Activated T-helper 1 cell treated with anti-CD3 and anti-CD28 coated beads, Interleukin-12 subunit alpha, Interleukin-12 subunit beta, Interleukin-2, Interleukin-4 antibody, amounts not matched to agents 30 ng/mL and 10 ng/mL and 1 ng/mL, durations not matched to agents 14 hours and 24 hours and 36 hours (primary cell): ENCODE measurements at regions of chr7 and their contacts with region 1.

Region 1: GRCh38 chr7:28037220-28038010 is 143.2 kb downstream of the JAZF1 start:
- DNase-seq: no peak
- H3K4me3 Mint-ChIP-seq: peak overlapping the region; percentile 34
- H3K27ac Mint-ChIP-seq: peak overlapping the region; percentile 70
- H3K4me1 Mint-ChIP-seq: peaks cover 31% of the 10 kb centered on the region
- H3K27me3 Mint-ChIP-seq: peaks cover 16% of the 10 kb centered on the region

Region 2: DNA sequence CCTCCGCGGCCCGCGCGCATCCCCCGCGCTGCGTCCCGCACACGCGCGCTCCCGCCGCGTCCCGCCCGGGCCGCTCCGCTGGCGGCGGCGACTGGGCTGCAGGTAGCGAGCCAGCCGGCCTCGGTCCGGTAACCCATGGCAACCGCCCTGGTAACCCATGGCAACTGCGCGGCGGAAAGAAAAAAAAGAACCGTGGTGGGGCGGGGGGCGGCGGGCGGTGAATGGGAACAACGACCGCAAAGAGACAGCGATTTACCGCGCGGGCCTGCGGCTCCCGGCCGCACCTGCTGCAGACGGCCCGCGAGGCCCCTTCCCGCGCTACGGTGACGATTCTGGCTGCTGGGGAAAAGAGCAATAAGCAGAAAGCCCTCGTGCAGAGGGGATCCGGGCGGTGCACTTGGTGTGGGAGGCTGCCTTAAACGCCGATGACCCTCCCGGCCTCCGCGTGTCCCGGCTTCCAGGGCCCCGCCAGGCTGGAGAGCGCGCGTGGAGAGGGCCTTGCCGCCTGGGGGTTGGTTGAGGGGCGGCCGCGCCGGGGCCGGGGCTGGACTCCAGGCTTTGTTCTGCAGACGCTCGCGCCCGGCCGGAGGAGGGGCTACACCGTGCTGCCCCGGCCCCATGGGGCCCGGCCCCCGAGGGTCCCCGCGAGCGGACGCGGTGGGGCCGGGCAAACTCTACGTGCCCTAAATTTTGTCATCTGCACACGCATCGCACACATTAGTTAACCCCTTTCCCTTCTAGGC is 1661.1 kb before region 1 on chr7:
- intact Hi-C with region 1: loop called (anchors 10 kb)
- DNase-seq: peak; percentile 20
- H3K4me3 Mint-ChIP-seq: peak overlapping the region; percentile 79
- H3K27ac Mint-ChIP-seq: peak overlapping the region; percentile 79
- H3K4me1 Mint-ChIP-seq: peaks cover 7% of the 10 kb centered on the region
- H3K27me3 Mint-ChIP-seq: peaks cover 30% of the 10 kb centered on the region

Region 3: DNA sequence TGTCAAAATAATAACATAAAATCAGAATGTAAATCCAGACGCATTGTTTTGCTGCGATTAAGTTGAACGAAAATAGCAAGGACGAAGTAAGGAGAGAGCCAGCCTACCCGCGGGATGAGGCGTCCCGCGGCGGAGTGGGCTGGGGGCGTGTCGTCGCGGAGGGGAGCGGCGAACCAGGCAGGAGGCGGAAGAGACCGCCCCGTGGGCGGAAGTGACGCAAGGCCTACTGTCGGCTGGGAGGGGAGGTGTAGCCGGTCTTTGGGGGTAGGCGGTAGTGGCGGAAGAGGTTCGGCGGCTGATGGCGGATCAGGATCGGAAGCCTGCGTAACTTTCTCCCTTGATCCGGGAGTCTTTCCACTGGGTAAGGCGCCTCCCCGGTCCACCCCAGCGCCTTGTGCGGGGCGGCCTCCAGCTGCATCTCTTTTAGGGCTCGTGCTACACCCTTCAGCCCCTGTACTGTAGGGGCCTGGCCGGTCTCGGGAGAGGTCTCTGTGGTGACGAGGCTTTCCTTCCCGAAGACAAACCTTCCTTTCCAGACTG is 297.4 kb before region 1 on chr7 and contains the start of gene TAX1BP1:
- intact Hi-C with region 1: loop called (anchors 5 kb)
- DNase-seq: peak; percentile 93
- H3K4me3 Mint-ChIP-seq: peak within 1 kb of the TSS; percentile 92
- H3K27ac Mint-ChIP-seq: peak within 1 kb of the TSS; percentile 98
- H3K4me1 Mint-ChIP-seq: peaks cover 41% of the 10 kb centered on the region
- H3K27me3 Mint-ChIP-seq: peaks cover 2% of the 10 kb centered on the region
- total RNA-seq, gene TAX1BP1: 88.6 and 90.9 TPM in 2 replicates

Region 4: DNA sequence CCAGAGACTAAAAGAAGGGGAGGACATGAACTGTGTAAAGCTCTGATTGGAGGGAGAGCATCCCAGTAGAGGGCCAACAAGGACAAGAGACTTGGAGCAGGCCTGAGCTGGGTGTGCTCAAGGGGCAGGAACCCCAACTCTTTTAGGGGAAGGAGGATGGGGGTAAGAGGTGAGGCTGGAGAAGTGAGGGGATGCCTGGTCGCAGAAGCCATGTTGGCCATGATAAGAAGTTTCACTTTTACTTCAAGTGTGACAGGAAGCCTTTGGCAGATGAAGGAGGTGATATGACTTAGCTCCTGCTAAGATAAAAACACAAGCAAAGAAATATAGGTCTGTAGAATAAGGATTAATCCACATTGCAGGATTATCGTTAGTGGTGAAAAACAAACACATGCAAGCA is 65.1 kb before region 1 on chr7:
- intact Hi-C with region 1: loop called (anchors 2 kb)
- DNase-seq: peak; percentile 11
- H3K4me3 Mint-ChIP-seq: peak overlapping the region; percentile 41
- H3K27ac Mint-ChIP-seq: peak overlapping the region; percentile 12
- H3K4me1 Mint-ChIP-seq: peaks cover 21% of the 10 kb centered on the region
- H3K27me3 Mint-ChIP-seq: no peaks in the 10 kb centered on the region

Region 5: GRCh38 chr7:28155019-28155660 is 117.7 kb after region 1 on chr7:
- intact Hi-C with region 1: loop called (anchors 1 kb)
- DNase-seq: no peak
- H3K4me3 Mint-ChIP-seq: peak overlapping the region; percentile 43
- H3K27ac Mint-ChIP-seq: peak overlapping the region; percentile 75
- H3K4me1 Mint-ChIP-seq: peaks cover 58% of the 10 kb centered on the region
- H3K27me3 Mint-ChIP-seq: peaks cover 5% of the 10 kb centered on the region

Region 6: GRCh38 chr7:28292834-28293526 is 255.6 kb after region 1 on chr7:
- intact Hi-C with region 1: loop called (anchors 5 kb)
- DNase-seq: no peak
- H3K4me3 Mint-ChIP-seq: no peak overlapping the region
- H3K27ac Mint-ChIP-seq: no peak overlapping the region
- H3K4me1 Mint-ChIP-seq: peaks cover 8% of the 10 kb centered on the region
- H3K27me3 Mint-ChIP-seq: peaks cover 28% of the 10 kb centered on the region